Prostate gland (tissue), 2 donors: ENCODE measurements at regions of chr12 and their contacts with region 1.

Region 1: GRCh38 chr12:15789220-15790171 is at the start of gene EPS8:
- DNase-seq: peak; percentile 86
- H3K4me3 ChIP-seq: peak within 1 kb of the TSS; percentile 64 to 72
- H3K27ac ChIP-seq: peak within 1 kb of the TSS; percentile 86 to 89
- H3K4me1 ChIP-seq: no peaks in the 10 kb centered on the region
- H3K27me3 ChIP-seq: no peaks in the 10 kb centered on the region
- CTCF ChIP-seq: peak in 2 of 4 experiments; percentile 24 to 25
- POLR2A ChIP-seq: peak; percentile 94
- total RNA-seq, gene EPS8: 47.5 to 67.4 TPM

Region 2: DNA sequence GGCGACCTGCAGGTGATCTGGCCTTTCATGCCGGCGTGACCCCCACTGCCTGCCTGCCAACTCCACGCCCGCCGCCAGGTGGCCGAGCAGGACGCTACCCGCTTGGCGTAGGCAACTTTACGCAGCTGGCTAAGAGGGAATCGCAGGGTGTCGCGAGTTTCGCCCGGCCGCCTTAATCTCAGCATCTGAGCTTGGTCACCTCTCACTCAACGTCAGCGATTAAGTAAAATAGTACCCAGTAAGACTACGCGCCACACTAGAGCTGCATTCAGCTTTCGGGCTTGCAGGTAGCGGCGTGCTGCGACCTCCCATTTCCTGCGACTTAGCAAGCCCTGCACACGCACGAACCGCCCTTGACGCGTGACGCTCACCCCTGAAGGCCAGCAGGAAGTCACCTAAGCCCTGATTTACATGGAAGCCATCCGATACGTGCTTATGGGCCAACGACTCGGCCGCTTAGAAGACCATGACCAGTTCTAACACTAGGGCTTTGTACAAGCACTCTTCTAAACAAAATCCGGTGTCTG is 1019.5 kb before region 1 on chr12:
- intact Hi-C with region 1: loop called (anchors 10 kb)
- DNase-seq: peak; percentile 72
- H3K4me3 ChIP-seq: peak overlapping the region; percentile 73 to 82
- H3K27ac ChIP-seq: peak overlapping the region; percentile 86 to 92
- H3K4me1 ChIP-seq: no peaks in the 10 kb centered on the region
- H3K27me3 ChIP-seq: no peaks in the 10 kb centered on the region
- CTCF ChIP-seq: peak; percentile 72 to 91 (median 81)
- POLR2A ChIP-seq: no peak

Region 3: DNA sequence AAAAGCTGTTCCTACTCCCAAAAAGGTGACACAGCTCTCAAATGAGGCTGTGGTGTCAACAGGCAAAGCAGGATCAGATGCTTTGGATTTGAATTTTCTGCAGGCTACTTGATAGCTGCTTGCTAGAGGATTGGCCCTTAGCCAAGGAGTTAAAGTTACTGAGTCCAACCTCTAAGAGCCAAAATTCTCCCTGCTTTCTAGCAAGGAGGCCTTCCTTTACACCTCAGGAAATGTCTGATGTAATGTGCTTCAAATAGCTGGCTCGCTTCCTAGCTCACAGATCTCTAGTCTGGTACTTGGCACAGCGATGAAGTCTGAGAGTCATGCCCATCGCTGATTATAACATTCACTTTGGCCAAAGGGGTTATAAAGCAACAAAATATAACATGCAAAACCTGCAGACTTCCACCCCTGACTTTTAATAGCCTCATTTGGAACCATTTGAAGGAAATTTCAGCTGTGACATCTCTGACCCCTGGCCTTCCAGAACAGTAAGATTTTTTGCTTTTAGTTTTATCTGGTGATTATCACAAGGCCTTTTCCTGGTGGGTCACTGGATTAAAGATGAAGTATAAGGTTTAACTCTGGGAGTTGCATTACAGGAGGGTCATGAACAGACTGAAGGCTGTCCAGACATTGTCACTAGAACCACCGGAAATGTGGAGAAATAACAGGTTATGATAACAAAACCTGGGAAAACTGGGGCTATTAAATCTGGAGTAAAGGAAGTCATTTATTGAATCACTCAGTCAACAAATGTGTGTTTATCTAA is 190.0 kb before region 1 on chr12:
- intact Hi-C with region 1: loop called (anchors 5 kb)
- DNase-seq: no peak
- H3K4me3 ChIP-seq: no peak overlapping the region
- H3K27ac ChIP-seq: no peak overlapping the region
- H3K4me1 ChIP-seq: no peaks in the 10 kb centered on the region
- H3K27me3 ChIP-seq: no peaks in the 10 kb centered on the region
- CTCF ChIP-seq: no peak
- POLR2A ChIP-seq: no peak

Region 4: DNA sequence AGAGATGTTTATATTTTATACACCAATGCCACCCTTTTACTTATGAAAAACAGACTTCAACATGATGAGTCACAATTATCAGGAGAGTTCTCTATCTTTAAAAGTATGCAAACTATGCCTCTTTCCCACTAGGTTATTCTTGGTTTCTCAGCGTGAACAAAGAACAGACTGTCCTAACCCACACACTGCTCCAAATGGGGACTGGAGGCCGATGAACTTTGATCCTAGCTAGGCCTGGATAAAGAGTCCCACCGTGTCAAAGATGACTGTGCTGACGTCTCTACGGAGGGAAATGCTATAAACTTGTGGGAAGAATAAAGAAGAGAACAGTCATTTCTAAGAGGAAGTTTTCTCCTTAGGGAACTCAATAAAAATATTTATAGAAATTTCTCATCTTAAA is 160.4 kb before region 1 on chr12:
- intact Hi-C with region 1: loop called (anchors 10 kb)
- DNase-seq: peak; percentile 7
- H3K4me3 ChIP-seq: no peak overlapping the region
- H3K27ac ChIP-seq: peak overlapping the region; percentile 64 to 67
- H3K4me1 ChIP-seq: no peaks in the 10 kb centered on the region
- H3K27me3 ChIP-seq: no peaks in the 10 kb centered on the region
- CTCF ChIP-seq: no peak
- POLR2A ChIP-seq: no peak

Region 5: GRCh38 chr12:15698377-15698871 is 91.1 kb before region 1 on chr12:
- intact Hi-C with region 1: loop called (anchors 10 kb)
- DNase-seq: no peak
- H3K4me3 ChIP-seq: no peak overlapping the region
- H3K27ac ChIP-seq: peak overlapping the region; percentile 24 to 41
- H3K4me1 ChIP-seq: no peaks in the 10 kb centered on the region
- H3K27me3 ChIP-seq: no peaks in the 10 kb centered on the region
- CTCF ChIP-seq: no peak
- POLR2A ChIP-seq: no peak

Region 6: GRCh38 chr12:15757553-15758265 is 31.8 kb before region 1 on chr12:
- intact Hi-C with region 1: no loop called
- DNase-seq: no peak
- H3K4me3 ChIP-seq: no peak overlapping the region
- H3K27ac ChIP-seq: no peak overlapping the region
- H3K4me1 ChIP-seq: no peaks in the 10 kb centered on the region
- H3K27me3 ChIP-seq: no peaks in the 10 kb centered on the region
- CTCF ChIP-seq: no peak
- POLR2A ChIP-seq: no peak